Heart right ventricle (tissue), 16 donors: ENCODE measurements at regions of chr6 and their contacts with region 1.

Region 1: DNA sequence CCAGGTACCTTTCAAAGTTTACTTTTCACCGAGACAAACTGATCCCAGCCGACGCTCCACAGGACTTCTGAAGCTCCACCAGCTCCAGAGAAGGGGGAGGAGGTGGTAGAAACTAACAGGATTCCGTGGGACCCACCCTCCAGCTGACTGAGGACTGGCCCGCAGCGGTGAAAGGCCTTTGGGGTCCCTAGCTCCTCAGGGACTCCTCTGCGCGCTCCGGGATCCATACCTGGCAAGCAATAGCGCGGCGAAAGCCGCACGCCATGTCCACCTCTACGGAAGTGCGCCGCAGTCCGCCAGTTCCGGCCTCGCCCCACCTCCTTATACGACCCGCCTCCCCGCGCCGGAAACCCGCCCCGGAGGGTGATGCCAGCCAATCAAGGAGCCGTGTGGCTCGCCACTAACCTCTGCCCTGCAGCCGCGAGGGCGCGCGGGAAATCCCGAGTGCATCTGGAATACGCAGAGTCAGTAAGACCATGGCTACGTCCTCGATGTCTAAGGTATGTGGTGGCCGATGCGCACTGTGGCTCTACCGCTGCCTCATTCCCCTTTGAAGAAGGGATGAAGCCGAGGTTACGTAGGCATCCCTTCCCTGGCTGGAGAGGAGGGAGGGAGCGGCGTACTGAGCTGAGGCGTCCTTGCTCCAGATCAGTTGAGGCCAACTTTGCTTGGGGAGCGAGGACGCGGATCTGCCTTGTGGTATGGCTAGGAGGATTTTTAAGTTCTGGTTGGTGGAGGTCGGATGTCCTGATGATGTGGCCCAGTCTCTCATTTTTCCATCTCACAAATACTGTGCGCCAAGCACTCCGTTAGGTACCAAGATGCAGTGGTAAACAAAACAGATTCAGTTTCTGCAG is at the starts of genes ORC3 and RARS2:
- DNase-seq: peak; percentile 96 to 97
- ATAC-seq: peak; percentile 100
- H3K4me3 ChIP-seq: peak within 1 kb of the TSS; percentile 64 to 94 (median 83)
- H3K27ac ChIP-seq: peak within 1 kb of the TSS; percentile 19 to 90 (median 79)
- H3K4me1 ChIP-seq: peaks cover 2 to 47% (median 36%) of the 10 kb centered on the region in 9 donors
- H3K27me3 ChIP-seq: no peaks in the 10 kb centered on the region
- CTCF ChIP-seq: peak in 1 of 9 donors; percentile 12
- total RNA-seq, gene ORC3: 16.2 to 28.2 (median 24.5) TPM
- total RNA-seq, gene RARS2: 18.3 to 26.1 (median 20.3) TPM

Region 2: GRCh38 chr6:87407901-87408720 is 181.8 kb before region 1 on chr6 and contains the start of gene CFAP206:
- intact Hi-C with region 1: loop called in 1 of 10 experiments (anchors 2 kb)
- DNase-seq: peak; percentile 79 to 82
- ATAC-seq: peak; percentile 93 to 99 (median 96)
- H3K4me3 ChIP-seq: peak within 1 kb of the TSS; percentile 78 to 99 (median 90)
- H3K27ac ChIP-seq: peak within 1 kb of the TSS in 9 of 10 donors; percentile 71 to 88 (median 83)
- H3K4me1 ChIP-seq: peaks cover 0 to 15% (median 0%) of the 10 kb centered on the region in 9 donors
- H3K27me3 ChIP-seq: no peaks in the 10 kb centered on the region
- CTCF ChIP-seq: peak in 3 of 9 donors; percentile 14 to 33 (median 30)
- total RNA-seq, gene CFAP206: 0.18 to 0.54 (median 0.28) TPM in 5 of 10 donors, not detected in the others

Region 3: GRCh38 chr6:87540539-87540938 is 49.4 kb before region 1 on chr6:
- intact Hi-C with region 1: loop called in 1 of 10 experiments (anchors 5 kb)
- DNase-seq: peak in 1 of 2 donors; percentile 43
- ATAC-seq: peak in 7 of 8 donors; percentile 47 to 94 (median 81)
- H3K4me3 ChIP-seq: peak overlapping the region in 1 of 10 donors; percentile 2
- H3K27ac ChIP-seq: peak overlapping the region in 7 of 10 donors; percentile 13 to 67 (median 42)
- H3K4me1 ChIP-seq: peaks cover 0 to 20% (median 8%) of the 10 kb centered on the region in 9 donors
- H3K27me3 ChIP-seq: no peaks in the 10 kb centered on the region
- CTCF ChIP-seq: no peak

Region 4: DNA sequence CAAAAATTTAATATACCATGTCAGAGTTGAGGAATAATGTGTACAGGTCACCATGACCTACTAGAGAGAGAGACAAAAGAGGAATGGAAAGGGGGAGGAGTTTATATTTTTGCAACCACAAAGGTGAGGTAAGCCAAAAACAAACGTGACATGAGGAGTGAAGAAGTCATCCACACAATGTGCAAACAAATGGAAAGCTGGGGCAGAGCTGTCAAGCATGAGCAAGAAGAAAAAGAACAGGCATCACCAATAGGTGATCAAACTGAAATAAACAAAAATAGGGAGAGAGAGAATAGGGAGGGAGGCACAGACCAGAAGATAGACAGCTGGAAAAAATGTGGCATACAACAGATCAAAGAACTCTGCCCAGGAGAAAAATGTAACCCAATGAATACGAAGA is 15.6 kb before region 1 on chr6:
- intact Hi-C with region 1: no loop called
- DNase-seq: no peak
- ATAC-seq: peak in 4 of 8 donors; percentile 34 to 72 (median 56)
- H3K4me3 ChIP-seq: no peak overlapping the region
- H3K27ac ChIP-seq: no peak overlapping the region
- H3K4me1 ChIP-seq: peaks cover 0 to 39% (median 14%) of the 10 kb centered on the region in 9 donors
- H3K27me3 ChIP-seq: no peaks in the 10 kb centered on the region
- CTCF ChIP-seq: no peak

Region 5: DNA sequence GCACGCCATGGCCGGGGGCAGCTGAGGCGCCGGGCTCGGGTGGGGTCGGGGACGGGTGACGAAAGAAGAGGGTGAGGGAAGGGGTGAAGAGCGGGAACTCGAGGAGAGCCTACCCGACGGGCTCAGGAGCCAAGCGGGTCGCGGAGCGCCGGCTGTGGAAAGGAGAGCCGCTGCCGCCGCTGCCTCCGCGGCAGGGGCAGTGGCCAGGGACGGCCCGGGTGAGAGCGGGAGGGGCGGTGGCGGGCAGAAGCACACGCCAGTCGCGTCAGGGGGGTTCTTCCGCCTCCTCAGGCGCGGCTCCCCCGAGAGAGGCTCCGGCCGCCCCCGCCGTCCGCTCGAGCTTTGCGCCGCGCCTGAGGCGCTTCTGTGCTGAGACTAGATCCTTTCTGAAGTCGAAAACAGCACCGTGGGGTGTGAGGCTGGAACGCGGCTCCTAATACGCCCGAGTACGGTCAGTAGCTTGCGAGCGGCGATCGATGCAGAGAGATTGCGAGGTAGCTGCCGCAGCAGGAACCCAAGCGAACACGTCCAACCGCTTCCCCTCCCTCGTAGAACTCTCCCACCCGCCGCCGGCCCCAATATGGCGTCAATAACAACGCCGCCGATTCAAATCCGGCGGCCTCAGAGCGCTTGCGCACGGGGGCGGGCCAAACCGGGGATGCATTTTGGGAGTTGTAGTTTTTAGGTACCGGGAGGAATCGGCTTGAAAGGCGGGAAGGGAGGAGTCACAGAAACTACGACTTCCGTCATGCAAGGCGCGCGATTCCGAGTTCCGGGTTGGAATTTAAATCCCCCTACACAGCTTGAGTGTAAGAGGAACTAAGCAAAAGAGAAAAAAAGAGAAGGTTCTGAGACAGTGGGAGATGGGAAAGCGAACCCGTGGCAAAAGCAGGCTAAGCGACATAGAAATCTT is 112.0 kb after region 1 on chr6 and contains the start of gene AKIRIN2:
- intact Hi-C with region 1: loop called in 5 of 10 experiments (anchors 5 to 10 kb)
- DNase-seq: peak; percentile 96 to 97
- ATAC-seq: peak; percentile 94 to 98 (median 96)
- H3K4me3 ChIP-seq: peak within 1 kb of the TSS; percentile 77 to 99 (median 94)
- H3K27ac ChIP-seq: peak within 1 kb of the TSS; percentile 90 to 99 (median 98)
- H3K4me1 ChIP-seq: peaks cover 0 to 45% (median 34%) of the 10 kb centered on the region in 9 donors
- H3K27me3 ChIP-seq: no peaks in the 10 kb centered on the region
- CTCF ChIP-seq: no peak
- total RNA-seq, gene AKIRIN2: 33.9 to 56.0 (median 43.8) TPM

Region 6: DNA sequence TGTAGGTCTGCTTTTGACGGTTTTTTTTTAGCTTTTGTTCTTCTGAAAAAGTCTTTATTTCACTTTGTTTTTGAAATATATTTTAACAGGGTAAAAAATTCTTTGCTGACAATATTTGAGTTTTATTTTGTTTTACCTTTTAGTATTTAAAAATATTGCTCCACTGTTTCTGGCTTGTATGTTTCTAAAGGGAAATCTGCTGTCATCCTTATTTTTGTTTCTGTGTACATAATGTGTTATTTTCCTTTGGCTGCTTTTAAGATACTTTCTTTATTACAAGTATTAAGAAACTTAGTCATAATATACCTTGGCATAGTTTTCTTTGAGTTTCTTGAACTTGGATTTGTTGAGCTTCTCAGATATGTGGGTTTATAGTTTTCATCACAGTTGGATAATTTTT is 369.2 kb after region 1 on chr6:
- intact Hi-C with region 1: no loop called
- DNase-seq: no peak
- ATAC-seq: no peak
- H3K4me3 ChIP-seq: no peak overlapping the region
- H3K27ac ChIP-seq: no peak overlapping the region
- H3K4me1 ChIP-seq: no peaks in the 10 kb centered on the region
- H3K27me3 ChIP-seq: peaks cover 0 to 17% (median 0%) of the 10 kb centered on the region in 7 donors
- CTCF ChIP-seq: no peak

Region 7: DNA sequence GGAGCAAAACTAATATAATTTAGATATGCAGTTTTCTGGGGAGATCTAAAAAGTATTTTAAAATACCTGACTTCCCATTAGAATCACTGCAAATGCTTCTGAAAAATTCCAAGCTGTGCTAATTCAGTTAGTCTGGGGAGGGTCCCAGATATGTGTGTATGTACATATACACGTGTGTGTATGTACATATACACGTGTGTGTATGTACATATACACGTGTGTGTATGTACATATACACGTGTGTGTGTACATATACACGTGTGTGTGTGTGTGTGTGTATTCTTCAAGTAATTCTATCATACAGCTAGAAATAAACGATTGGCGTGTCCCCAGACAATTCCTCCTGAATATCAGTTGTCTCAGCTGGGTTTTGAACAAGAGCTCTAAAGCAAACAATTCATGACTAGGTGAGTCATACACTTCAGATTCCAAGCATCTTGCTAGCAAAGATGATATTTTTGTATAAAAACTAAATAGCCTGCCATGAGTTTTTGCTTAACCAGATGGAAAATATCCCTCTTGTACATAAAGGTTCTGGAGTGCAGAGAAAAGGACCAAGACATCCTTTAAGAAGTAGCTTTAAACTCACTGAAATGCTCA is 515.9 kb after region 1 on chr6:
- intact Hi-C with region 1: no loop called
- DNase-seq: no peak
- ATAC-seq: no peak
- H3K4me3 ChIP-seq: no peak overlapping the region
- H3K27ac ChIP-seq: no peak overlapping the region
- H3K4me1 ChIP-seq: no peaks in the 10 kb centered on the region
- H3K27me3 ChIP-seq: peaks cover 0 to 7% (median 0%) of the 10 kb centered on the region in 7 donors
- CTCF ChIP-seq: no peak

Region 8: DNA sequence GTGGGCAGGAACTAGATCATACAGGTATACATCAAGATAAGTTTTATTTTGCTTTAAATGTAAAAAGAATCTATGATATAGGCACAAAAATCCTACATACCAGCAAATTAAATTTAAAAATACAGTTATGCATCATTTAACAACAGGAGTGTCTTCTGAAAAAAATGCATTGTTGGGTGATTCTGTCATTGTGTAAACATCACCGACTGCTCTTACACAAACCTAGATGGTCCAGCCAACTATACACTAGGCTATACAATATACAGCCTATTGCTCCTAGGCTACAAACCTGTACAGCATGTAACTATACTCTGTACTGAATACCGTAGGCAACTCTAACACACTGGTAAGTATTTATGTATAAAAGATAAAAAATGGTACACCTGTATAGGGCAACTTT is 1234.1 kb after region 1 on chr6:
- intact Hi-C with region 1: no loop called
- DNase-seq: no peak
- ATAC-seq: no peak
- H3K4me3 ChIP-seq: no peak overlapping the region
- H3K27ac ChIP-seq: no peak overlapping the region
- H3K4me1 ChIP-seq: no peaks in the 10 kb centered on the region
- H3K27me3 ChIP-seq: no peaks in the 10 kb centered on the region
- CTCF ChIP-seq: no peak